H1 (cell line): ENCODE measurements at regions of chr22 and their contacts with region 1.

Region 1: DNA sequence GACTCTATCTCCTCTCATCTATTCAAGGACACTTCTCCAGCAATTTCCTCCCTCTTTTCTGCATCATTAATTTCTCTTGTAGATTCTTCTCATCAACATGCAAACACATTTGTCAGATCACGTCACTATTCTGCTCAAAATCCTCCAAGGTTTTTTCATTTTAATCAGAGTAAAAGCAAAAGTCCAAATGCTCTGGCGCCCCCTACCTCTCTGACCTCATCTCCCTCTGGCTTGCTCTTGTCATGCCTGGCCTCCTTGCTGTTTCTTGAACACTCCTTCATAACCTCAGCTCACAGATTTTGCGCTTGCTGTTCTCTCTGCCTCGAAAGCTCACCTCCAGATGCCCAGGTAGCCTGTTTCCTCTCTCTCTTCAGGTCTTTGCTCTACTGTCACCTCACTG is 22.4 kb downstream of the RTCB start:
- DNase-seq: peak in 1 of 2 experiments; percentile 59
- H3K4me3 ChIP-seq: no peak overlapping the region
- H3K27ac ChIP-seq: no peak overlapping the region
- H3K4me1 ChIP-seq: no peaks in the 10 kb centered on the region
- H3K27me3 ChIP-seq: no peaks in the 10 kb centered on the region
- CTCF ChIP-seq: peak; percentile 44 to 55 (median 46); a peak in 3 of 4 replicates
- EP300 ChIP-seq: no peak
- POLR2A ChIP-seq: no peak
- RAD21 ChIP-seq: peak; percentile 47 to 55; a peak in 3 of 4 replicates

Region 2: GRCh38 chr22:32401486-32401885 is 11.8 kb after region 1 on chr22:
- CTCF ChIA-PET with region 1: interaction called, 27 read pairs
- POLR2A ChIA-PET with region 1: interaction called, 5 read pairs
- DNase-seq: no peak
- H3K4me3 ChIP-seq: no peak overlapping the region
- H3K27ac ChIP-seq: no peak overlapping the region
- H3K4me1 ChIP-seq: no peaks in the 10 kb centered on the region
- H3K27me3 ChIP-seq: no peaks in the 10 kb centered on the region
- CTCF ChIP-seq: no peak
- EP300 ChIP-seq: no peak
- POLR2A ChIP-seq: no peak
- RAD21 ChIP-seq: no peak

Region 3: DNA sequence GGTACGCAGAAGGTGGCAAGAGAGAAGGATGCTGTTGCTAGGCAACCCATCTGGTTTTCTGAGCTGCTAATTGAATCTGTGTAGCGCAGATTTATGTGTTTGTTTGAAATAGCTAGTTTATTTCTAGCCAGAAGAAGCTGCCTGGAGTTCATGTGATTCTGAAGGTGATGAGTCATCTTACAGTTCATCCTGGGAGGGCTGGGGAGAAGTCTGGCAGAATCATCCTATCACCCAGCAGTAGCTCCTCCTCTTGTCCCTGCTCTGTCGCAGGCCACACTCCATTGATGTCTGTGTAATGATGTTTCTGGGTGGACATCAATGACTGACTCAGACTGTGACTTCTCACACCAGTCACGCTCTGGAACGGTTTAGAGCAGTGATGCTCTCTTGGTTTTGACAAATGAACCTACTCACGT is 80.1 kb after region 1 on chr22:
- CTCF ChIA-PET with region 1: interaction called, 10 read pairs
- POLR2A ChIA-PET with region 1: no interaction called
- DNase-seq: no peak
- H3K4me3 ChIP-seq: no peak overlapping the region
- H3K27ac ChIP-seq: no peak overlapping the region
- H3K4me1 ChIP-seq: peaks cover 0 to 3% (median under 1%) of the 10 kb centered on the region in 4 experiments; a peak in 2 of 7 replicates
- H3K27me3 ChIP-seq: peaks cover 0 to 13% (median 4%) of the 10 kb centered on the region in 4 experiments; a peak in 5 of 7 replicates
- CTCF ChIP-seq: no peak
- EP300 ChIP-seq: no peak
- POLR2A ChIP-seq: no peak
- RAD21 ChIP-seq: no peak